Heart right ventricle (tissue), 16 donors: ENCODE measurements at regions of chr4 and their contacts with region 1.

Region 1: DNA sequence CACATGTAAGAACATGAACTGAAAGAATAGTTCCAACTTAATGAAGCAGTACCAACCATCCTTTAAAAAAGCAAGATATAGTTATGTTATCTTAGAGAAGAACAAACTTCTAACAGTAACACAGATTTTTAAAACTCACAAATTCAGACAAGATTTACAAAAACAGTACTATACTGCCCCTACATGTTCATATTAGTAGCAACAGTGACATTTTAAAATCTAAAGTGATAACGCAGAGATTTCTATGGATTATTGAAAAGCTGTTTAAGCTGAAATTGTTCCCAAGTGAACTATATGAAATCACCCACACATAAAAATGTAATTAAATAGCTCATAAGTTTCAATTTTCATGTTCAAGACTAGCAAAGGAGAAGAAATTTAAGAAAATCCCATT is 166.0 kb downstream of the FBXW7 start:
- DNase-seq: no peak
- ATAC-seq: no peak
- H3K4me3 ChIP-seq: no peak overlapping the region
- H3K27ac ChIP-seq: no peak overlapping the region
- H3K4me1 ChIP-seq: peaks cover 0 to 30% (median 4%) of the 10 kb centered on the region in 9 donors
- H3K27me3 ChIP-seq: no peaks in the 10 kb centered on the region
- CTCF ChIP-seq: peak in 7 of 9 donors; percentile 23 to 55 (median 40)

Region 2: GRCh38 chr4:152021788-152022438 is 348.0 kb before region 1 on chr4:
- intact Hi-C with region 1: loop called in 1 of 10 experiments (anchors 10 kb)
- DNase-seq: peak; percentile 18 to 52
- ATAC-seq: peak; percentile 51 to 93 (median 76)
- H3K4me3 ChIP-seq: no peak overlapping the region
- H3K27ac ChIP-seq: peak overlapping the region in 8 of 10 donors; percentile 25 to 75 (median 44)
- H3K4me1 ChIP-seq: peaks cover 0 to 26% (median 12%) of the 10 kb centered on the region in 9 donors
- H3K27me3 ChIP-seq: no peaks in the 10 kb centered on the region
- CTCF ChIP-seq: no peak

Region 3: GRCh38 chr4:152032722-152033131 is 337.2 kb before region 1 on chr4:
- intact Hi-C with region 1: loop called in 2 of 10 experiments (anchors 10 kb)
- DNase-seq: no peak
- ATAC-seq: peak in 6 of 8 donors; percentile 48 to 91 (median 54)
- H3K4me3 ChIP-seq: no peak overlapping the region
- H3K27ac ChIP-seq: peak overlapping the region in 9 of 10 donors; percentile 34 to 74 (median 55)
- H3K4me1 ChIP-seq: peaks cover 0 to 18% (median 4%) of the 10 kb centered on the region in 9 donors
- H3K27me3 ChIP-seq: no peaks in the 10 kb centered on the region
- CTCF ChIP-seq: no peak

Region 4: GRCh38 chr4:152045807-152046571 is 323.9 kb before region 1 on chr4:
- intact Hi-C with region 1: loop called in 2 of 10 experiments (anchors 10 kb)
- DNase-seq: peak; percentile 38 to 48
- ATAC-seq: peak; percentile 63 to 85 (median 70)
- H3K4me3 ChIP-seq: peak overlapping the region in 6 of 10 donors; percentile 16 to 32 (median 24)
- H3K27ac ChIP-seq: peak overlapping the region in 7 of 10 donors; percentile 0 to 79 (median 55)
- H3K4me1 ChIP-seq: peaks cover 2 to 13% (median 10%) of the 10 kb centered on the region in 9 donors
- H3K27me3 ChIP-seq: peaks cover 0 to 21% (median 0%) of the 10 kb centered on the region in 7 donors
- CTCF ChIP-seq: peak; percentile 34 to 72 (median 63)

Region 5: DNA sequence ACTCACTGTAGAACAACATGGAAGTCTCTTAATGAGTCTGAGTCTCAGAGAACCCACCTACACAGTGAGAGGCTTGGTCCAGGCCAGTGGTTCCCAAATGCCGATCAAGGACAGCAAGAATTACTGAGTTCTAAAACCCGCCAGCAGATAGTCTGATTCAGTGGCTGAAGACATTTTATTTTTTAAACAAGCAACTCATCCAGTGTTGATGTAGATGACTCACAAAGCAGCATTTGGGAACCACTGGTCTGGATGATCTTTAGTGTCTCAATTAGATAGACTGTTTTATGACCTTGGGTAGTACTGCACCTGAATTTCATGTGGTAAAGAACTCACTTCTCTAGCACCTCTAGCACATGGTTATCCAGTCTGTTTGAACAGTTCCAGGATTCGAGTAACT is 27.6 kb before region 1 on chr4:
- intact Hi-C with region 1: no loop called
- DNase-seq: no peak
- ATAC-seq: no peak
- H3K4me3 ChIP-seq: no peak overlapping the region
- H3K27ac ChIP-seq: no peak overlapping the region
- H3K4me1 ChIP-seq: peaks cover 0 to 11% (median 4%) of the 10 kb centered on the region in 9 donors
- H3K27me3 ChIP-seq: no peaks in the 10 kb centered on the region
- CTCF ChIP-seq: no peak